ENCODE measurements at regions of chr15 and their contacts with region 1.

Region 1: GRCh38 chr15:99123706-99124451 is 19.0 kb downstream of the SYNM start:
- DNase-seq: peak; percentile 95
- H3K4me3 ChIP-seq: no peak overlapping the region
- H3K27ac ChIP-seq: peak overlapping the region; percentile 88
- H3K4me1 ChIP-seq: peaks cover 30% of the 10 kb centered on the region
- H3K27me3 ChIP-seq: no peaks in the 10 kb centered on the region
- CTCF ChIP-seq: no peak
- POLR2A ChIP-seq: no peak

Region 2: DNA sequence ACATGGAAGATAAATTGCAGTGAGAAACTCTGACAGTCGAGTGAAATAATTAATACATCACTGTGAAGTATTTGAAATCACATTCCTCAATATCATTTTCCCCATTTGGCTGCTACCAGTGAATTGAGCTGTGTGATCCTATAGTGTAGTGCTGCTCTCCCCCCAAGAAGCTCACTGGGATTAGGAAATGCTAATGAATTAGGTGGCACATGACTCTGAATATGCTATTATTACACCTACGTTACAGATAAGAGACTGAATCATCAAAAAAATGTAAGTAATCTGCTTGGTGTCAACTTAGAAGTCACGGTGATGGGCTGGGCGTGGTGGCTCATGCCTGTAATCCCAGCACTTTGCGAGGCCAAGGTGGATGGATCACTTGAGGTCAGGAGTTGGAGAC is 53.7 kb before region 1 on chr15:
- CTCF ChIA-PET with region 1: no interaction called
- POLR2A ChIA-PET with region 1: no interaction called
- dilution Hi-C with region 1: no loop called
- intact Hi-C with region 1: no loop called
- DNase-seq: no peak
- H3K4me3 ChIP-seq: no peak overlapping the region
- H3K27ac ChIP-seq: no peak overlapping the region
- H3K4me1 ChIP-seq: no peaks in the 10 kb centered on the region
- H3K27me3 ChIP-seq: peaks cover 0 to 1% of the 10 kb centered on the region in 2 experiments
- CTCF ChIP-seq: no peak
- POLR2A ChIP-seq: no peak

Region 3: DNA sequence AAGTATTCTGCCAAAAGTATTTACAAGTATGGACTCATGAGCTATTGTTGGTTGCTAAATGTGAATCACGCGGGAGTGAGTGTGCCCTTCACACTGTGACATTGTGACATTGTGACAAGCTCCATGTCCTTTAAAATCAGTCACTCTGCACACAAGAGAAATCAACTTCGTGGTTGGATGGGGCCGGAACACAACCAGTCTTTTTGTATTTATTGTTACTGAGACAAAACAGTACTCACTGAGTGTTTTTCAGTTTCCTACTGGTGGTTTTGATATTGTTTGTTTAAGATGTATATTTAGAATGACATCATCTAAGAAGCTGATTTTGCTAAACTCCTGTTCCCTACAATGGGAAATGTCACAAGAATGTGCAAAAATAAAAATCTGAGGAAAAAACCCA is 11.3 kb after region 1 on chr15:
- CTCF ChIA-PET with region 1: interaction called, 9 read pairs
- POLR2A ChIA-PET with region 1: no interaction called
- dilution Hi-C with region 1: no loop called
- intact Hi-C with region 1: loop called (anchors 1 kb)
- DNase-seq: peak; percentile 54
- H3K4me3 ChIP-seq: no peak overlapping the region
- H3K27ac ChIP-seq: peak overlapping the region; percentile 26
- H3K4me1 ChIP-seq: peaks cover 21% of the 10 kb centered on the region
- H3K27me3 ChIP-seq: no peaks in the 10 kb centered on the region
- CTCF ChIP-seq: no peak
- POLR2A ChIP-seq: no peak

Region 4: DNA sequence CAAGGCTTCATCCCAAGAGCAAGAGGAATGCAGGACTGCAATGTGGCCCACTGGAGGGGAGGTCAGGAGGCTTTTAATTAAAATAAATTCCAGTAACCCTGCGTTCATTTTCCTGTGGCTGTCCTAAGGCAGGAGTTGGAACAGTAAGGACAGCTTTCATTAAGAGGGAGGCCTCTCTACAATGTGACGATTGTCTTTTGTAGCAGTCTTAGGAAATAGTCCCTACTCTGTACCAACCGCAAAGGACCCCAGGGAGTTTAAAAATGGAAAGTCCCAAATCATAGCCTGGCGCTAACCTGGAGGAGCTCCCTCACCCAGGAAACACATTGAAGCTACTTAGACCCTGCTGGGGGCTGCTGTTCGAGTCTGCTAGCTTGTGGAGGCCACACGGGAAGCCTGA is 43.8 kb after region 1 on chr15:
- CTCF ChIA-PET with region 1: no interaction called
- POLR2A ChIA-PET with region 1: no interaction called
- dilution Hi-C with region 1: no loop called
- intact Hi-C with region 1: loop called (anchors 2 kb)
- DNase-seq: no peak
- H3K4me3 ChIP-seq: no peak overlapping the region
- H3K27ac ChIP-seq: no peak overlapping the region
- H3K4me1 ChIP-seq: peaks cover 13% of the 10 kb centered on the region
- H3K27me3 ChIP-seq: no peaks in the 10 kb centered on the region
- CTCF ChIP-seq: no peak
- POLR2A ChIP-seq: no peak

Region 5: GRCh38 chr15:99213187-99213811 is 89.4 kb after region 1 on chr15:
- CTCF ChIA-PET with region 1: interaction called, 14 read pairs
- POLR2A ChIA-PET with region 1: no interaction called
- dilution Hi-C with region 1: no loop called
- intact Hi-C with region 1: loop called (anchors 1 kb)
- DNase-seq: peak; percentile 77
- H3K4me3 ChIP-seq: no peak overlapping the region
- H3K27ac ChIP-seq: no peak overlapping the region
- H3K4me1 ChIP-seq: peaks cover 11% of the 10 kb centered on the region
- H3K27me3 ChIP-seq: no peaks in the 10 kb centered on the region
- CTCF ChIP-seq: peak; percentile 79 to 83
- POLR2A ChIP-seq: no peak

Region 6: GRCh38 chr15:99250494-99251435 is 126.9 kb after region 1 on chr15:
- CTCF ChIA-PET with region 1: no interaction called
- POLR2A ChIA-PET with region 1: no interaction called
- dilution Hi-C with region 1: no loop called
- intact Hi-C with region 1: loop called (anchors 1 kb)
- DNase-seq: peak; percentile 100
- H3K4me3 ChIP-seq: peak overlapping the region; percentile 77 to 100 (median 80)
- H3K27ac ChIP-seq: peak overlapping the region; percentile 89
- H3K4me1 ChIP-seq: peaks cover 30% of the 10 kb centered on the region
- H3K27me3 ChIP-seq: no peaks in the 10 kb centered on the region
- CTCF ChIP-seq: no peak
- POLR2A ChIP-seq: peak; percentile 89

Measured in endothelial cell of umbilical vein (primary cell).